ENCODE measurements at regions of chr18 and their contacts with region 1.

Region 1: GRCh38 chr18:74291771-74292540 is at the start of gene CYB5A:
- DNase-seq: peak; percentile 97 to 99 (median 98)
- ATAC-seq: peak; percentile 96
- H3K4me3 ChIP-seq: peak within 1 kb of the TSS; percentile 99
- H3K4me3 Mint-ChIP-seq: no peak within 1 kb of the TSS
- H3K27ac ChIP-seq: peak within 1 kb of the TSS in 1 of 2 donors; percentile 61
- H3K27ac Mint-ChIP-seq: peak within 1 kb of the TSS; percentile 35
- H3K4me1 ChIP-seq: peaks cover 19% of the 10 kb centered on the region
- H3K4me1 Mint-ChIP-seq: peaks cover 12% of the 10 kb centered on the region
- H3K27me3 ChIP-seq: no peaks in the 10 kb centered on the region
- H3K27me3 Mint-ChIP-seq: no peaks in the 10 kb centered on the region
- CTCF ChIP-seq: peak; percentile 20
- total RNA-seq, gene CYB5A: 3.7 to 4.1 TPM

Region 2: GRCh38 chr18:73824671-73825070 is 467.3 kb before region 1 on chr18:
- CTCF ChIA-PET with region 1: no interaction called
- POLR2A ChIA-PET with region 1: no interaction called
- intact Hi-C with region 1: no loop called
- DNase-seq: no peak
- ATAC-seq: no peak
- H3K4me3 ChIP-seq: no peak overlapping the region
- H3K4me3 Mint-ChIP-seq: no peak overlapping the region
- H3K27ac ChIP-seq: no peak overlapping the region
- H3K27ac Mint-ChIP-seq: no peak overlapping the region
- H3K4me1 ChIP-seq: no peaks in the 10 kb centered on the region
- H3K4me1 Mint-ChIP-seq: no peaks in the 10 kb centered on the region
- H3K27me3 ChIP-seq: no peaks in the 10 kb centered on the region
- H3K27me3 Mint-ChIP-seq: no peaks in the 10 kb centered on the region
- CTCF ChIP-seq: no peak

Region 3: GRCh38 chr18:74147779-74148542 is 144.0 kb before region 1 on chr18 and contains the starts of genes FBXO15 and TIMM21:
- CTCF ChIA-PET with region 1: no interaction called
- POLR2A ChIA-PET with region 1: no interaction called
- intact Hi-C with region 1: loop called in 1 of 2 experiments (anchors 5 kb)
- DNase-seq: peak; percentile 90 to 99 (median 96)
- ATAC-seq: peak; percentile 83
- H3K4me3 ChIP-seq: peak within 1 kb of the TSS; percentile 83
- H3K4me3 Mint-ChIP-seq: peak within 1 kb of the TSS; percentile 96
- H3K27ac ChIP-seq: peak within 1 kb of the TSS; percentile 95 to 99
- H3K27ac Mint-ChIP-seq: peak within 1 kb of the TSS; percentile 99
- H3K4me1 ChIP-seq: peaks cover 25% of the 10 kb centered on the region
- H3K4me1 Mint-ChIP-seq: peaks cover 58% of the 10 kb centered on the region
- H3K27me3 ChIP-seq: no peaks in the 10 kb centered on the region
- H3K27me3 Mint-ChIP-seq: no peaks in the 10 kb centered on the region
- CTCF ChIP-seq: no peak
- total RNA-seq, gene FBXO15: 0.58 to 1.0 TPM
- total RNA-seq, gene TIMM21: 10.7 to 11.8 TPM

Region 4: GRCh38 chr18:74353169-74353775 is 61.3 kb after region 1 on chr18:
- CTCF ChIA-PET with region 1: no interaction called
- POLR2A ChIA-PET with region 1: no interaction called
- intact Hi-C with region 1: loop called in 1 of 2 experiments (anchors 5 kb)
- DNase-seq: peak; percentile 35 to 85 (median 52)
- ATAC-seq: peak; percentile 88
- H3K4me3 ChIP-seq: no peak overlapping the region
- H3K4me3 Mint-ChIP-seq: no peak overlapping the region
- H3K27ac ChIP-seq: no peak overlapping the region
- H3K27ac Mint-ChIP-seq: no peak overlapping the region
- H3K4me1 ChIP-seq: peaks cover 2% of the 10 kb centered on the region
- H3K4me1 Mint-ChIP-seq: peaks cover 5% of the 10 kb centered on the region
- H3K27me3 ChIP-seq: no peaks in the 10 kb centered on the region
- H3K27me3 Mint-ChIP-seq: no peaks in the 10 kb centered on the region
- CTCF ChIP-seq: peak; percentile 85

Region 5: GRCh38 chr18:75003764-75004690 is 712.1 kb after region 1 on chr18:
- CTCF ChIA-PET with region 1: no interaction called
- POLR2A ChIA-PET with region 1: no interaction called
- intact Hi-C with region 1: no loop called
- DNase-seq: no peak
- ATAC-seq: no peak
- H3K4me3 ChIP-seq: no peak overlapping the region
- H3K4me3 Mint-ChIP-seq: no peak overlapping the region
- H3K27ac ChIP-seq: no peak overlapping the region
- H3K27ac Mint-ChIP-seq: no peak overlapping the region
- H3K4me1 ChIP-seq: no peaks in the 10 kb centered on the region
- H3K4me1 Mint-ChIP-seq: no peaks in the 10 kb centered on the region
- H3K27me3 ChIP-seq: no peaks in the 10 kb centered on the region
- H3K27me3 Mint-ChIP-seq: no peaks in the 10 kb centered on the region
- CTCF ChIP-seq: no peak